Heart left ventricle (tissue), 16 donors: ENCODE measurements at regions of chr5 and their contacts with region 1.

Region 1: DNA sequence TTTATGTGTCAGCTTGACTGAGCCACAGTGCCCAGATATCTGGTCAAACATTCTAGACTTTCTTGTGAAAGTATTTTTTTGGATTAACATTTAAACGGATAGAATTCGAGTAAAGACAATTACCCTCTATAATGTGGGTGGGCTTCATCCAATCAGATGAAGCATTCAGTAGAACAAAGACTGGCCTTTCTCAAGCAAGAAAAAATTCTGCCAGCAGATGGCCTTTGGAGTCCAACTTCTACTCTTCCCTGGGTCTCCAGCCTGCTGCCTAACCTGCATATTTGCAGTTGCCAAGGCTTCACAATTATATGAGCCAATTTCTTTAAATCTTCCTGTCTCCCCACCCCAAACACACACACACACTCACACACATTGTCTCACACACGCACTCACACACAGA is 86.4 kb downstream of the MED10 start:
- DNase-seq: no peak
- ATAC-seq: no peak
- H3K4me3 ChIP-seq: no peak overlapping the region
- H3K27ac ChIP-seq: no peak overlapping the region
- H3K4me1 ChIP-seq: no peaks in the 10 kb centered on the region
- H3K27me3 ChIP-seq: no peaks in the 10 kb centered on the region
- CTCF ChIP-seq: peak in 10 of 12 donors; percentile 25 to 53 (median 41)
- POLR2A ChIP-seq: no peak

Region 2: DNA sequence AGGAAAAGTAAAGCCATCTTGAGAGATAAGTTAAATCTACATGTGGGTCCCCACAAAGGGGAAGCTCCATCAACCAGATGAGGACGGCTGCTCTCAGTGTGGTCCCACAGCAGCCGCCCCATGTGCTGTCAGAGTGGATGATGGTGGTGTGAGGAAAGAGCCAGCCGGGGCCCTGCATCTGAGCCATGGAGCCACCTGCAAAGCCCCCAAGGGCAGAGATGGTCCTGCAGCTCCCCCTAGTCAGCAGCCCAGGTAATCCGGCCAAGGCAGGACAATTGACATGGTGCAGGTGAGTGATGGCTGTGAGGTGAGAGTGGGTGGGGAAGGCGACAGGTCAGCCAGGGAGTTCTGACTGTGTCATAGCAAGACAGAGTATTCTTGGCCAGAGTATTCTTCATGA is 410.7 kb before region 1 on chr5:
- intact Hi-C with region 1: no loop called
- DNase-seq: peak in 1 of 5 donors; percentile 23
- ATAC-seq: peak in 2 of 4 donors; percentile 32 to 53
- H3K4me3 ChIP-seq: no peak overlapping the region
- H3K27ac ChIP-seq: no peak overlapping the region
- H3K4me1 ChIP-seq: no peaks in the 10 kb centered on the region
- H3K27me3 ChIP-seq: peaks cover 0 to 5% (median 0%) of the 10 kb centered on the region in 9 donors
- CTCF ChIP-seq: peak in 5 of 12 donors; percentile 11 to 43 (median 17)
- POLR2A ChIP-seq: no peak

Region 3: GRCh38 chr5:6251565-6252102 is 40.3 kb before region 1 on chr5:
- intact Hi-C with region 1: no loop called
- DNase-seq: no peak
- ATAC-seq: no peak
- H3K4me3 ChIP-seq: no peak overlapping the region
- H3K27ac ChIP-seq: no peak overlapping the region
- H3K4me1 ChIP-seq: no peaks in the 10 kb centered on the region
- H3K27me3 ChIP-seq: no peaks in the 10 kb centered on the region
- CTCF ChIP-seq: no peak
- POLR2A ChIP-seq: no peak

Region 4: GRCh38 chr5:6435356-6435755 is 143.4 kb after region 1 on chr5:
- intact Hi-C with region 1: loop called in 1 of 10 experiments (anchors 5 kb)
- DNase-seq: no peak
- ATAC-seq: no peak
- H3K4me3 ChIP-seq: no peak overlapping the region
- H3K27ac ChIP-seq: no peak overlapping the region
- H3K4me1 ChIP-seq: peaks cover 0 to 23% (median 7%) of the 10 kb centered on the region in 12 donors
- H3K27me3 ChIP-seq: no peaks in the 10 kb centered on the region
- CTCF ChIP-seq: peak in 11 of 12 donors; percentile 5 to 44 (median 23)
- POLR2A ChIP-seq: no peak

Region 5: DNA sequence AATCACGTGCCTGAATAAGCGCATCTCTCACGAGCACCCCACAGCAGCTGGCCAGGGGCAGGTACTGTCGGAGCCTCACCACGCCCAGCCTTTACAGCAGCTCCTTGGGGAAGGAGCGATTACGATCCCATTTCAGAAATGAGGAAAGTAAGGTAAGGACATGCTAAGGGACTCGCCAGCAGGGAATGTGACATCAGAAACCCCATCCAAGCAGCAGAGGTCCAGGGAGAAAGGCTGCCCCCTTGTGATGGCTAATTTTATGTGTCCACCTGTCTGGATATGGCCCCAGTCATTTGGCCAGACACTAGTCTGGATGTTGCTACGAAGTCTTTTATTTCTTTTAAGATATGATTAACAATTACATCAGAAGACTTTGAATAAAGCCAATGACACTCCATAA is 233.9 kb after region 1 on chr5:
- intact Hi-C with region 1: loop called in 4 of 10 experiments (anchors 5 to 10 kb)
- DNase-seq: no peak
- ATAC-seq: peak; percentile 63 to 87 (median 73)
- H3K4me3 ChIP-seq: no peak overlapping the region
- H3K27ac ChIP-seq: no peak overlapping the region
- H3K4me1 ChIP-seq: no peaks in the 10 kb centered on the region
- H3K27me3 ChIP-seq: no peaks in the 10 kb centered on the region
- CTCF ChIP-seq: peak in 11 of 12 donors; percentile 22 to 51 (median 41)
- POLR2A ChIP-seq: no peak

Region 6: DNA sequence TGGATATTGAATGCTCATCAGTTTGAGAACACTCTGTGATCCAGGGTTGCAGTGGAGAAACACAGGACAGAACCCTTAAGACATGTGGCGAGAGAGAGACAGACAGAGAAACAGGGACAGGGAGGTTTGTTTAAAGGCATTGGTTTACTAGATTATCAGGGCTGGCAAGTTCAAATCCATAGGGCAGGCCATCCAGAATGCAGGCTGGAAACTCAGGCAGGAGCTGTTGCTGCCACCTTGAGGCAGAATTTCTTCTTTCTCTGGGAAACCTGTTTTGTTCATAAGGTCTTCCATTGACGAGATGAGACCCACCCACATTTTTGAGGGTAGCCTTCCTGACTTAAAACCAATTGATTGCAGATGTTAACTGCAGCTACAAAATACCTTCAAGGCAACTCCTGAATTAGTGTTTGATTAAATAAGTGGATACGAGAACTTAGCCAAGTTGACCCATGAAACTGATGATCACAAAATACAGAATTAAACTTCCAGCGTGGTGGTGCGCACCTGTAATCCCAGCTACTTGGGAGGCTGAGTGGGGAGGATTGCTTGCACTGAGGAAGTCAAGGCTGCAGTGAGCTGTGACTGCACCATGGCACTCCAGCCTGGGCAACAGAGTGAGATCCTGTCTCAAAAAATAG is 285.0 kb after region 1 on chr5:
- intact Hi-C with region 1: loop called in 4 of 10 experiments (anchors 5 to 10 kb)
- DNase-seq: no peak
- ATAC-seq: peak in 2 of 4 donors; percentile 45 to 53
- H3K4me3 ChIP-seq: no peak overlapping the region
- H3K27ac ChIP-seq: no peak overlapping the region
- H3K4me1 ChIP-seq: peaks cover 0 to 16% (median 4%) of the 10 kb centered on the region in 12 donors
- H3K27me3 ChIP-seq: peaks cover 0 to 7% (median 0%) of the 10 kb centered on the region in 9 donors
- CTCF ChIP-seq: peak; percentile 26 to 63 (median 49)
- POLR2A ChIP-seq: no peak

Region 7: DNA sequence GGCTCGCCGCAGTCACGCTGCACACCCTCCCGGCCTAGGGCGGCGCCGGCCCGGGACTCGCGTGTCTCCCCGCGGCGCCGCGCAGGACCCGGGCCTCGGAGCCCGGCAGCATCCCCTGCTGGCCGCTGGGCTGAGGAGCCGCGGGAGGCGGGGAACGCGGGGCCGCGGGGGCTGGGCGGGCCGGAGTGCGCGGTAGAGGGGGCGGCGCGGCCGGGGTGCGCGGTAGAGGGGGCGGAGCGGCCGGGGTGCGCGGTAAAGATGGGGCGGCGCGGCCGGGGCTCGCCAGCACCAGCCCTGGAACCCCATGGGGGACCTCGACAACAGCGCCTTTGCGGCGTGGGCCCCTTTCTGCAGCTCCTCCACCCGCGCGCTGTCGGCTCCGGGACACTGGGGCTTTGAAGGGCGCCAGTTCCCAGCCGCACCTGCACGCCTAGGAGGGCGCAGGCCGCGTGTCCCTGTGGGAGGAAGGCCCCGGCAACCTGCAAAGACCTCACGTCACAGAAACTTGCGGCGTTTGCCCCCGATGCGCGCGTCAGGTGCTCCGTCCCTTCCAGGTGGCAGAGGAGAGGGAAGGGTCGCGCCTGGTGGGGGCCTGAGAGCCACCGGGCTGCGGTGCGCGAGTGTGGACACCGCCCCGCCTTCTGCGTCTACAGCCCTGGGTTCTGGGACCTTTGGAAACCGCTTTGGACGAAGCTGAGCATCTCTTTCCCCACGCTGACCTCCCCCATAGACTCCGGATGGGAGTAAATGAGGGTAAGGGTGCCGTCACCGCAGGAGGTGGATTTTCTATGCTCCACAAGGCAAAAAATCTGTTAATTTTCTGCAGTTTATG is 291.3 kb after region 1 on chr5:
- intact Hi-C with region 1: loop called in 4 of 10 experiments (anchors 5 to 10 kb)
- DNase-seq: peak in 4 of 5 donors; percentile 39 to 67 (median 53)
- ATAC-seq: peak; percentile 48 to 96 (median 84)
- H3K4me3 ChIP-seq: peak overlapping the region in 11 of 12 donors; percentile 30 to 61 (median 48)
- H3K27ac ChIP-seq: peak overlapping the region in 1 of 12 donors; percentile 2
- H3K4me1 ChIP-seq: peaks cover 0 to 15% (median 2%) of the 10 kb centered on the region in 12 donors
- H3K27me3 ChIP-seq: peaks cover 0 to 30% (median 0%) of the 10 kb centered on the region in 9 donors
- CTCF ChIP-seq: peak in 11 of 12 donors; percentile 17 to 65 (median 42)
- POLR2A ChIP-seq: no peak